ENCODE measurements at regions of chr22 and their contacts with region 1.

Region 1: DNA sequence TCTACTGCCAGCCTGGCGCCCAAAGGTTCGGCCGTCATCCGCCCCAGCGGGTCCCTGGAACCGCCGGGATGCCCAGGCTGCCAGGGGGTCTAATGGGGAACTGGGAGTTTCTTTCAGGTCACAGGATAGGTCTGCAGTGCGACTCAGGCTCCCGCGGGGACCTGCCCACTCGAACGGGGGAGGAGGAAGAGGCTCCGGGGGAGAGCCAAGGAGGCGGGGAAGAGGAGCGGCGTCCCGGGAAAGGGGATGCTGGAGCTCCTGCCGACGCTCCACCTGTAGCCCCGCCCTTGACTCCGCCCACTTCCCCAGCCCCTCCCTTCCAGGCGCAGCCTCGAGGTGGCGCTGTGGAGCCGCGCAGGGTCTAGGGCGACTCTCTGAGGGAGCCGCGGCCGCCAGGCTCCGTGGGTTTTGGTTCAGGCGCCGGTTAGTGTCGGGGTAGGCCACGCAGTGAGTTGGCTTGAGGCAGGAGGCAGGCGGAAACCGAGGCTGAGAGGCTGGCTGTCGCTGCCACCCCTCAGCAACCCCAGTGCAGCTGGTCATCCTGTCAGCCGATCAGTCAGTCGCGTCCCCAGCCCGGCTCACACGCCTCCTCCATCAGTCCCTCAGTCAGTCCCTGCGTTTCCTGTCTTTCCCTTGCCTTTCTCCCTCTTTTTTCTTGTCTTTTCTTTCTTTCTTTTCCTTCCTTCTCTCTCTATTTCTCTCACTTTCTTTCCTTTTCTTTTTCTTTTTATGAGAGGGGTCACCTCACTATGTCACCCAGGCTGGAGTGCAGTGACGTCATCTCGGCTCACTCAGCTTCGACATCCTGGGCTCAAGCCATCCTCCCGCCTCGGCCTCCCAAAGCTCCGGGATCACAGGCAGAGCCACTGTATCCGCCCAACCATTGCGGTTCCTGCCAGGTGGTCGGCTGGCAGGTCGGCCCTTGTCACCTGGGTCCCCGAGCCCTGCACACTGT is 26.4 kb downstream of the YWHAH start:
- DNase-seq: peak; percentile 89

Region 2: DNA sequence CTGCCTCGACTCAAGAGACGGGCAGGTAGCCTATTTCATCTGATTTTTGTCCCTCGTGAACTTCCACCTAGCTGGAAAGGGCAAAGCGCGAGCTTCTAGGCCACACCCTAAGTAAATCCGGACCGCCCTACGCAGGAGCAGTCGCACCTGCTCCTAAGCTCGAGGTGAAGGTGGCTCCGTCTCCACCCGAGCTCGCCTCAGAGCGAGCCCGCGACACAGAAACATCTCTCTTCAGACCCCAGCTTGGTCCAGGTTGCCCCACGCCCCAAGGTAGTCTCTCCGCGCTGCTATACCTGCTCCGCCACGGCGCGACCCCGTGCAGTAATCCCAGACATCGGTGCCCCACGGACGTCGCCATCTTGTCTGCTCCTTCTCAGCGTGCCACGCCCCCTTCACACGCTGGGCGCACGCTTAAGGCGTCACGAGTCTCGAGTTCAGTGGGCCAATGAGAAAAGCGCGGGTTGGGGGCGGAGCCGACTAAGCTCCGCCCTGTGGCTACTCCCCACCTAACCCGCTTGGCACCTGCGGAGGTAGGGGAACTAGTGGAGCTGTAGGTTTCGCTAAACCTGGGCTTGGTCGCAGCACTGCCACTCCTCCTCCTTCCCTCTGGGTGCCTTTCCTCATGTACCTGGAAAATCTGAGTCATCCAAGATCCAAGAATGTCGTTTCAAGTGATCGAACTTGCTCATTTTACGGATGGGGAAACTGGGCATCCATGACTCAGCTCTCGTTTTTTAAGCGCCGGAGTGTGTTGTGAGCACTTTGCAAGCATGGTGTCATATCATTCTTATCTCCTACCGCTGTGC is 308.7 kb before region 1 on chr22 and contains the start of gene PISD:
- in situ Hi-C with region 1: loop called (anchors 25 kb)
- DNase-seq: peak; percentile 98

Measured in KBM-7 (cell line).